Left ventricle myocardium inferior (tissue), 1 donor: ENCODE measurements at regions of chr2 and their contacts with region 1.

Region 1: DNA sequence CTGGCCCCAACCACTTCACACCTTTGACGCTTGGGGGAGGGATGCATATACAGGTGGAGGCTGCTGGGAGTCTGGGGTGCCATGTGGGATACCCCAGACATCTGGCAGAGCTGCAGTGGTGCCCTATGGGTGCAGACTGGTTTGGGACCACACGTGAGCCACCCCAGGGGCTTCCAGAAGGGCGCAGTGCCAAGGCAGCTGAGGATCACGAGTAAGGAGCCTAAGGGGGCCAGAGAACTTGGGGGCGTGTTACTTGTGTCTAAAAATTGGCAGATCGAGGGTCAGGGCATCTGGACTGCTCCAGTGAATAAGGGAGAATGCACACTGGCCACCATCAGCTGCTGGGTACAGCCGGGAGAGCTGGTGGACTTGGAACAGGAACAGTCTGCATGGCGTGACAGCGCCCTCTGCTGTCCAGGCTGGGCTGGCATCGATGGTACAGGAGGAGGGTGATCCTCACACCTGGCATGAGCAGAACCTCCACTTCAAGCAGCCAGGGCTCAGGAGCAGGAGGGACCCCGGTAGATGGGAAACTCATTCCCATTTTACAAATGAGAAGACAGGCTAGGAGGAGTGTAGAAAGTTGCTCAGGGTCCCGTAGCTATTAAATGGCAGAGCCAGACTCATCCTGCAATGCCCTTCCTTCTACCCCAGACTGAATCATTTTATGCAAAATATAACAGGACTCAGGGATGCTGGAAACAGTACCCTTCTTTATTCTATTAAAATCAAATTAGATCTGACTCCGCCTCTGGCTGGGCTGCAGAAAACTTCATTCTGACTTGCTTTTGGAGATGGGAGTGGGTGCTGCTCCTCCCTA is 60.4 kb downstream of the ATOH8 start:
- DNase-seq: peak; percentile 91
- H3K4me3 ChIP-seq: no peak overlapping the region
- H3K27ac ChIP-seq: no peak overlapping the region
- H3K4me1 ChIP-seq: peaks cover 25% of the 10 kb centered on the region
- H3K27me3 ChIP-seq: no peaks in the 10 kb centered on the region
- CTCF ChIP-seq: peak; percentile 97

Region 2: DNA sequence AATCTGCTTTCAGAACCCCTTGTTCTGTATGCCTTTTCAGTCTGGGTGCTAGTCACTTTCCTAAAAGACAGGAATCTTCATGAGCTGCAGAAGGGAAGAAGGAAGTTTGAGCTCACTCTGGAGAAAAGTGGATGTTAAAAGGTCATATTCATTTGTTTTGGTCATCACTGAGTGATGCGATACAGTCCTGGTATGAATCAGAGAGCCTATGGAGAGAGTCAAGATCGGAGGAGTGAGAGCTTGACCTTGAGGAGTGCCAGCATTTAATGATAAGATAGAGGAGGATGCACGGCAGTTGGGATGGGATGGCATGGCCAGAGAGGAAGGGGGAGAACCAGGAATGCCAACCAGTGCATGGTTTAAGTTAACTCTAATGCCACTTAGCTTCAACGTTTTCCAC is 178.6 kb before region 1 on chr2:
- intact Hi-C with region 1: loop called (anchors 5 kb)
- DNase-seq: no peak
- H3K4me3 ChIP-seq: no peak overlapping the region
- H3K27ac ChIP-seq: no peak overlapping the region
- H3K4me1 ChIP-seq: peaks cover 10% of the 10 kb centered on the region
- H3K27me3 ChIP-seq: no peaks in the 10 kb centered on the region
- CTCF ChIP-seq: no peak

Region 3: DNA sequence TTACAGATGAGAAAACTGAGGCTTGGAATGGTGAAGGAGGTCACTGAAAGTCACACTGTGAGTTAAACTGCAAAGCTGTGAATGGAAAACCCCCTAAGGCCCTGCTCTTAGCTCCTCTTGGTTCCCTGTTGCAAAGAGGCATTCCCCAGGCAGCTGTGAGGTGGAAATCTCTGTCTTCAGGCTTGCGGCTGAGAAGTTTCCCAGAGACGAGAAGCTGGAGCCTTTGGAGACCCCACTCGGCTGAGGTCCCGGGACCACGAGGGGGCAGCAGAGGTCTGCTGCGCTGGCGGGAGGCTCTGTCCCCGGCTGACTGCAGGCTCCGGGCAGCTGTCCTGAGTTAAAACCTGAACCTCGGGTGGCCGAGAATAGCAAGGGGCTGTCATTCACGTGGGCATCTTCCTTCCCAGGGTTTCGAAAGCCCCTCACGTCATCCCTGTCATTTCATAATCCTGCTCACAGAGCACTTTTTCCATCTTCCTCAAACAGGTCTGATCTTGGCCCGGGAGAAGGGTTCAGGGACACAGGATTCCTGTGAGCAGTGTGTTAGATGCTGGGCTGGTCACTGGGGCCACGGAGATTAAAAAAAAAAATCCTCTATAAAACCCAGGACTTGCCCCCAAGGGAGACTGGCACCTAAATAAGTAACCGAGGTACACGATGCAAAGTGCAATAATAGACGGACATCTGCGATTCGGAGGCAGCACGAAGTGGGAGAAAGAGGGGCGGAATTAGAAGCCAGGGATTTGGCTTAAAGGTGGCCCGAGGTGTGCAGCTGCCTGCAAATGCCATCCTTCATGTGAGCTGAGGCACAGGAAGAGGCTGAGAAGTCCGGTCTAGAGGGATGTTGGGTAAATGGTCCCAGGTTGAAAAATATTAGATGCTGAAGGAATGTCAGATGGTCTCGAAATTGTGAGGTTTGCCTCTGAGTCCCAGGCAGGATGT is 85.0 kb before region 1 on chr2:
- intact Hi-C with region 1: loop called (anchors 2 kb)
- DNase-seq: peak; percentile 91
- H3K4me3 ChIP-seq: no peak overlapping the region
- H3K27ac ChIP-seq: peak overlapping the region; percentile 67
- H3K4me1 ChIP-seq: peaks cover 52% of the 10 kb centered on the region
- H3K27me3 ChIP-seq: no peaks in the 10 kb centered on the region
- CTCF ChIP-seq: peak; percentile 100

Region 4: GRCh38 chr2:85765081-85765731 is 49.0 kb before region 1 on chr2:
- intact Hi-C with region 1: no loop called
- DNase-seq: no peak
- H3K4me3 ChIP-seq: peak overlapping the region; percentile 24
- H3K27ac ChIP-seq: peak overlapping the region; percentile 42
- H3K4me1 ChIP-seq: peaks cover 98% of the 10 kb centered on the region
- H3K27me3 ChIP-seq: no peaks in the 10 kb centered on the region
- CTCF ChIP-seq: no peak